Adrenal gland (tissue), 19 donors: ENCODE measurements at regions of chr3 and their contacts with region 1.

Region 1: DNA sequence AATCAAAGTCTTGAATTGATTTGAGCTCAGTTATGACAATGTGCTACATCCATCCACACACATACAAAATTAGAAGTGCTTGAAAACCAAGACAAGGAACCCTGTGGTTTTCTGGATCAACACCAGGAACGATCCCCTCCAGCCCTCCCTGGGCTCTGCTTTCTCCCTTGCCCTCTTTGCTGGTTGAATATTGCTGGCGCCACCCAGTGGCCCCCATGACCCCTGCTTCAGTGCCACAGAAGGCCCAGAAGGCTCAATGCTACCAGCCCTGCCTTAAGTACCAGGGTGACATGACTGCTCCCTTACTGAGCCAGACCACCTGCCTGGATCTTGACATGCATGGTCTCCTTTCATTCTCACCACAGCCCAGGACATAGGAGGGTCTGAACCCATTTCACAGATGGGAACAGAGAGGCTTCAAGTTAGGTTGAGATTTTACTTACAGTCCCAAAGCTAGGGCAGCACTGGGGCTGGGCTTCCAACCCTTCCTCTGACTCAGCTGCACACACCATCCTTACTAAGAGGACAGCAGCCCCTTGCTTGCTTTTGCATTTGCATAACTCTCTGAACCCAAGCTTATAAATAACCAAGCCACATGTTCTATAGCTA is 15.0 kb downstream of the IL12A start:
- DNase-seq: peak in 6 of 7 donors; percentile 25 to 68 (median 45)
- H3K4me3 ChIP-seq: no peak overlapping the region
- H3K27ac ChIP-seq: no peak overlapping the region
- H3K4me1 ChIP-seq: no peaks in the 10 kb centered on the region
- H3K27me3 ChIP-seq: no peaks in the 10 kb centered on the region
- CTCF ChIP-seq: peak in 5 of 6 experiments; percentile 13 to 44 (median 29)
- POLR2A ChIP-seq: no peak

Region 2: GRCh38 chr3:159828542-159828943 is 175.1 kb before region 1 on chr3:
- intact Hi-C with region 1: loop called in 1 of 2 experiments (anchors 5 kb)
- DNase-seq: no peak
- H3K4me3 ChIP-seq: no peak overlapping the region
- H3K27ac ChIP-seq: no peak overlapping the region
- H3K4me1 ChIP-seq: peaks cover 0 to 18% of the 10 kb centered on the region in 2 donors
- H3K27me3 ChIP-seq: no peaks in the 10 kb centered on the region
- CTCF ChIP-seq: peak; percentile 26 to 63 (median 46)
- POLR2A ChIP-seq: no peak

Region 3: GRCh38 chr3:159884661-159885402 is 118.8 kb before region 1 on chr3:
- intact Hi-C with region 1: loop called (anchors 2 to 5 kb)
- DNase-seq: no peak
- H3K4me3 ChIP-seq: no peak overlapping the region
- H3K27ac ChIP-seq: no peak overlapping the region
- H3K4me1 ChIP-seq: peaks cover 0 to 11% of the 10 kb centered on the region in 2 donors
- H3K27me3 ChIP-seq: no peaks in the 10 kb centered on the region
- CTCF ChIP-seq: peak; percentile 22 to 70 (median 63)
- POLR2A ChIP-seq: no peak